IMR-90 (cell line): ENCODE measurements at regions of chr13 and their contacts with region 1.

Region 1: GRCh38 chr13:46721054-46721453 is 75.9 kb downstream of the ESD start:
- DNase-seq: peak; percentile 53
- ATAC-seq: peak; percentile 74
- H3K4me3 ChIP-seq: no peak overlapping the region
- H3K27ac ChIP-seq: no peak overlapping the region
- H3K4me1 ChIP-seq: peaks cover 1% of the 10 kb centered on the region; the same call in 1 of the 2 replicates
- H3K27me3 ChIP-seq: no peaks in the 10 kb centered on the region
- CTCF ChIP-seq: peak; percentile 76
- POLR2A ChIP-seq: no peak
- RAD21 ChIP-seq: peak; percentile 86

Region 2: DNA sequence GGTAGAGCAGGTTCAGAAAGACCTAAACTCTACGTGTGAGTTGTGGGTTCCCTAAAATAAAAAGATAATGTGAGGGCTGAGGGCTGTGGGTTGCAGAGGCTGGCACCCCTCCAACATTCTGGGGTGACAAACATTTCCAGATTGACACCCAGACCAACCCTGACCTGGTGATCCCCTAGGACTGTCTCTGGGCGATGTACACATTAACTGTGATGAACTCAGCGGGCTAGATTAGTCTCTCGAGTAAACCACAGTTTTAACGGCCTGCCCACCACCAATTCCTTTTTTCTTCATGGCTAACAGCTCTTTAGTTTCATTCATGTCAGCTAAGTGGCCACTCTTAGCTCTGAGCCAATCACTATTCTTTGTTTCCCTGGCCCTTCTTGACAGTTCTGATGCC is 894.3 kb before region 1 on chr13:
- CTCF ChIA-PET with region 1: interaction called, 10 read pairs
- POLR2A ChIA-PET with region 1: no interaction called
- dilution Hi-C with region 1: no loop called
- in situ Hi-C with region 1: no loop called
- intact Hi-C with region 1: no loop called
- DNase-seq: no peak
- ATAC-seq: no peak
- H3K4me3 ChIP-seq: no peak overlapping the region
- H3K27ac ChIP-seq: no peak overlapping the region
- H3K4me1 ChIP-seq: no peaks in the 10 kb centered on the region
- H3K27me3 ChIP-seq: peaks cover 11% of the 10 kb centered on the region
- CTCF ChIP-seq: no peak
- POLR2A ChIP-seq: no peak
- RAD21 ChIP-seq: no peak

Region 3: DNA sequence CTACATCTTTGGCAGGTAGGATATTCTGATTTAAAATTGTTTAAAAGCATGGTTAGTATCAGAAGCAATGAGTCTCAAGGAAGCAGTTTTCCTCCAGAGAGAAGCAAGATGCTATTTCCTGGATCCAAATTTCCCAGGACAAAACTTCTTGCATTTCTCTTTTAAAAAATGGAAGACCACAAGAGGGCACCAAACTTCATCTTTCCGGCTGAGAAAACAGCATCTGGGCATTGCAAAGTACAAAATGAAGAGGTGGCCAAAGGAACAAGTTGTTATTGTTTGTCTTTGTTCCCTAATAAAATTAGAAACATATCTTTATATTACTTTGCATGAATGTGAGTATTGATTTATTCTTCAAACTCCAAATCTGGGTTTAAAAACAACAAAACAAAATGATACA is 228.1 kb before region 1 on chr13:
- CTCF ChIA-PET with region 1: interaction called, 7 read pairs
- POLR2A ChIA-PET with region 1: no interaction called
- dilution Hi-C with region 1: no loop called
- in situ Hi-C with region 1: loop called (anchors 10 kb)
- intact Hi-C with region 1: loop called (anchors 1 kb)
- DNase-seq: peak; percentile 48
- ATAC-seq: peak; percentile 60
- H3K4me3 ChIP-seq: no peak overlapping the region
- H3K27ac ChIP-seq: no peak overlapping the region
- H3K4me1 ChIP-seq: peaks cover 2% of the 10 kb centered on the region; the same call in 1 of the 2 replicates
- H3K27me3 ChIP-seq: peaks cover 2% of the 10 kb centered on the region
- CTCF ChIP-seq: peak; percentile 68
- POLR2A ChIP-seq: no peak
- RAD21 ChIP-seq: peak; percentile 80

Region 4: DNA sequence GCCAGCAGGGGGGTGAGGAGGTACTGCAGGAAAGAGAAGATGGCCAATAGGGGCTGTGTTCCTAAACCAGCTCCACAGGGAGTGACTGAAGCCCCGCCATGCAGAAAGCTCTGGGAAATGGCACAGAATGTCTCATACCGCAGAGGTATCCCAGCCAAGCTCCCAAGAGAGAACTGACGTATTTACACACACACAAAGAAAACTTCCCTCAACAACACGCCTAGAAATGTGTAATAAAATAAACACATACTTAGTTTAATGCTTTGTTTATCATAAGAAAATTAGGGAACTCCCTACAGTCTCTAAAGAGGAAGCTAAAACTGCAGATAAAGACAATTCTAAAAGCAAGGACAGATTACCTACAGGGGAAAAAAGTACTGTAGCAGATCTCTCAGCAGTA is 35.9 kb after region 1 on chr13:
- CTCF ChIA-PET with region 1: no interaction called
- POLR2A ChIA-PET with region 1: no interaction called
- dilution Hi-C with region 1: no loop called
- in situ Hi-C with region 1: no loop called
- intact Hi-C with region 1: no loop called
- DNase-seq: peak; percentile 48
- ATAC-seq: peak; percentile 58; the same call in 1 of the 2 replicates
- H3K4me3 ChIP-seq: no peak overlapping the region
- H3K27ac ChIP-seq: no peak overlapping the region
- H3K4me1 ChIP-seq: no peaks in the 10 kb centered on the region; the same call in 1 of the 2 replicates
- H3K27me3 ChIP-seq: peaks cover 10% of the 10 kb centered on the region
- CTCF ChIP-seq: no peak
- POLR2A ChIP-seq: no peak
- RAD21 ChIP-seq: no peak